Activated CD4-positive, alpha-beta memory T cell treated with anti-CD3 and anti-CD28 coated beads for 36 hours (primary cell): ENCODE measurements at regions of chr11 and their contacts with region 1.

Region 1: DNA sequence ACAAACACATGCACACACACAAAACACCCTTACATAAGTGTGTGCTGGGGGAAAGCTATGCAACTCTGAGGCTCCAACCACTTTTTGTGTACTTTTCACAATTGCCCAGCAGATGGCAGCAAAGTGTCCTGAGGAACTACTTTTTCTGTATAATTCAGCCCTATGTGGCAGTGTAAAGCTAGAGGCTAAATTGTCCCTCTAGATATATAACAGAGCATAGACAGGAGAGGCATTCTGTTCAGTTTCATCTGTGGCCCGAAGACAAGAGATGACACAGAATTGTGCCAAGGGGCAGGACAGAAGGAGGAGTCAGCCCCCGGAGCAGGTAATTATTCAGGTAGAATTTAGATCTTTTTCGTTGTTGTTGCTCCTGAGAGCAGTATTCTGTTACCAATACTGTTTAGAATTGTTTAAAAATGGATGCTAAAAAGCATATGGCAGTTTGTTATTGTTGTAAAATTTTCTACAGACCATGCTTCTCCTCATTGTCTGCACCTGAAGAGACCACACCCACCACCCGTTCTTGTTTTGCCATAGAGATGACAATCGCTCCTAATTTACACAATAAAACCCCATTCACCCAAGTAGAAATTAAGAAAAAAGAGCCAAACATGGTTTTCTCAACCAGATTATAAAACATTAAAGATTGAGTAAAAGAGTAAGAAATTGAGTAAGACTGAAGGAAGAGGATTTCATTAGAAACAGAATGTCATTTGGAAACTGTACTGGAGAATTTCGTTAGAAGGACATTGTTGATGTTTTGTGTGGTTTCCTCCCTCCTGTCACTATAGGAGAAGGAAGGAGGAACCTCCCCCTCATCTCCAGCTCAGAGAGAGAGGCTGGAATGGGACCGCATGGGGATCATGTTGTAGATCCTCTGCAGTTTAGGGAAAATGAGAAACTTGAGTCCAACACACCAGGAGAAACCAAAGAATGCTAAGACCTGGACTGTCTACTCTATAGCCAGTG is 14.5 kb upstream of the MS4A7 start:
- DNase-seq: peak; percentile 65
- H3K4me3 Mint-ChIP-seq: no peak overlapping the region
- H3K27ac Mint-ChIP-seq: no peak overlapping the region
- H3K4me1 Mint-ChIP-seq: peaks cover 3% of the 10 kb centered on the region
- H3K27me3 Mint-ChIP-seq: peaks cover 31% of the 10 kb centered on the region

Region 2: DNA sequence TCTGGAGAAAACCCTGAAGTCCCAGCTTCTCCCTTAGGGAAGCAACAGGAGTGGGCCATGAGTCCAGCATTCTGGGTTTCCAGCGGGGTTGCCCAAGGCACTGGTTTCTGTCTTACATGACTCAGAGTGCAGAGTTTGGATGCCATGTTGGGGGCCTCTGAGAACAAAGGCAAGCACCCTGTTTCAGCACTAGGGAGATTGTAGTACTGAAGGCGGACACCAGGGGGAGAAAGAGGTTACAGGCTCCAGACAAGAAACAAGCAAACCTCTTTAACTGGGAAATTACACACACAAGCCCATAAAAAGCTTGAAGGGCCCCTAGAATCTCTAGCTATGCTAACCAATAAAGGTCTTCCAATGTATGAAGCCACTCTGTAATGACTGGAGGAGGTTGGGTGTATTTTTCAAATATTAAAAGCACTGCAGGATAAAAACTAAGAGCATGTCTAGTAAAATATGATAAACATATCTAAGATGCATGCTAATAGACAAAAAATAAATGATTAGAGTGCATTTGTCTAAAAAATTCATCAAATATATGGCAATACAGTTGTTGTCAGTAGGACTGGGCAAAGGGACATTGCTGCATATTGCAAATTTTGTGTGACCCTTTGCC is 29.7 kb before region 1 on chr11:
- CTCF ChIA-PET with region 1: interaction called, 15 read pairs
- POLR2A ChIA-PET with region 1: no interaction called
- intact Hi-C with region 1: no loop called
- DNase-seq: peak; percentile 74
- H3K4me3 Mint-ChIP-seq: no peak overlapping the region
- H3K27ac Mint-ChIP-seq: no peak overlapping the region
- H3K4me1 Mint-ChIP-seq: no peaks in the 10 kb centered on the region
- H3K27me3 Mint-ChIP-seq: peaks cover 25% of the 10 kb centered on the region

Region 3: GRCh38 chr11:60485986-60486385 is 122.2 kb after region 1 on chr11:
- CTCF ChIA-PET with region 1: interaction called, 17 read pairs
- POLR2A ChIA-PET with region 1: no interaction called
- intact Hi-C with region 1: loop called (anchors 1 kb)
- DNase-seq: peak; percentile 44
- H3K4me3 Mint-ChIP-seq: no peak overlapping the region
- H3K27ac Mint-ChIP-seq: no peak overlapping the region
- H3K4me1 Mint-ChIP-seq: peaks cover 8% of the 10 kb centered on the region
- H3K27me3 Mint-ChIP-seq: peaks cover 4% of the 10 kb centered on the region

Region 4: DNA sequence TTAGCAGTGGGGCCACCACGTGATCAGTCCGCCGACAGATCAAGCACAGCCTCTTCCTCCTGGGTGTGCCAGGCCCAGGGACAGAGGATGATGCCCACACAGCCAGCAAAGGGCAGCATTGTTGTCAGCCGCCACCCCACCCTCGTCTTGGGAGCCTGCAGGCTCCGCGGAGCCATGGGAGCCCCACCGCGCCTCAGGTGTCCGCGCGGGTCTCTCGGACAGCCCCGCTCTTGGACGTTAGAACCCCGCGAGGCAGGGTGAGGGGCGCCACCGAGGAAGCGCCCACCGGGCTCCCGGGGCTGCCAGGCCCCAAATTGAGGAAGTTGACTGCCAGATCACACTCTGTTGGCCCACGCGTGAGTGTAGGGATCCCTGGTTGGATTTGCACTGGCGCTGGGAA is 251.7 kb after region 1 on chr11:
- CTCF ChIA-PET with region 1: interaction called, 102 read pairs
- POLR2A ChIA-PET with region 1: no interaction called
- intact Hi-C with region 1: loop called (anchors 1 kb)
- DNase-seq: no peak
- H3K4me3 Mint-ChIP-seq: no peak overlapping the region
- H3K27ac Mint-ChIP-seq: no peak overlapping the region
- H3K4me1 Mint-ChIP-seq: no peaks in the 10 kb centered on the region
- H3K27me3 Mint-ChIP-seq: peaks cover 11% of the 10 kb centered on the region